ENCODE measurements at regions of chr10 and their contacts with region 1.

Region 1: GRCh38 chr10:12279281-12279680 is 70.1 kb upstream of the CAMK1D start:
- DNase-seq: no peak
- H3K4me3 ChIP-seq: no peak overlapping the region
- H3K27ac ChIP-seq: no peak overlapping the region
- H3K4me1 ChIP-seq: no peaks in the 10 kb centered on the region
- H3K27me3 ChIP-seq: no peaks in the 10 kb centered on the region
- CTCF ChIP-seq: no peak

Region 2: GRCh38 chr10:12934777-12935176 is 655.5 kb after region 1 on chr10:
- CTCF ChIA-PET with region 1: interaction called, 25 read pairs
- dilution Hi-C with region 1: no loop called
- in situ Hi-C with region 1: no loop called
- intact Hi-C with region 1: no loop called
- DNase-seq: peak; percentile 85
- H3K4me3 ChIP-seq: no peak overlapping the region
- H3K27ac ChIP-seq: no peak overlapping the region
- H3K4me1 ChIP-seq: peaks cover 6% of the 10 kb centered on the region
- H3K27me3 ChIP-seq: no peaks in the 10 kb centered on the region
- CTCF ChIP-seq: no peak

Measured in mammary epithelial cell (primary cell).